Motor neuron (in vitro differentiated cells): ENCODE measurements at regions of chr15 and their contacts with region 1.

Region 1: DNA sequence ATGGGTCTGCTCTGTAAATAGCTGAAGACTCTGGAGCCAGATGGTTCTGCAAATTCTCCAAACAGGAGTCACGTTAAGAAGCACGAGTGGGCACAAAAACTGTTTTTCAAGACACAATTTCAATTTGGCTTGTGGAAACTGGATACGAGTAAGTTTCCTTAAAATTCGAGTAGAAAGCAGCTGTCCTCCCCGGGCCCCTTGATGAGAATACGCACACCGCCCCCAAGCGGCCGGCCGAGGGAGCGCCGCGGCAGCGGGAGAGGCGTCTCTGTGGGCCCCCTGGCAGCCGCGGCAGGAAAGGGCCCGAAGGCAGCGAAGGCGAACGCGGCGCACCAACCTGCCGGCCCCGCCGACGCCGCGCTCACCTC is 778 bp upstream of the THBS1 start:
- ATAC-seq: peak; percentile 75 to 90 (median 86)
- H3K4me3 ChIP-seq: peak overlapping the region; percentile 30 to 48 (median 39)
- H3K27ac ChIP-seq: no peak overlapping the region
- H3K4me1 ChIP-seq: peaks cover 0 to 5% of the 10 kb centered on the region in 2 donors

Region 2: DNA sequence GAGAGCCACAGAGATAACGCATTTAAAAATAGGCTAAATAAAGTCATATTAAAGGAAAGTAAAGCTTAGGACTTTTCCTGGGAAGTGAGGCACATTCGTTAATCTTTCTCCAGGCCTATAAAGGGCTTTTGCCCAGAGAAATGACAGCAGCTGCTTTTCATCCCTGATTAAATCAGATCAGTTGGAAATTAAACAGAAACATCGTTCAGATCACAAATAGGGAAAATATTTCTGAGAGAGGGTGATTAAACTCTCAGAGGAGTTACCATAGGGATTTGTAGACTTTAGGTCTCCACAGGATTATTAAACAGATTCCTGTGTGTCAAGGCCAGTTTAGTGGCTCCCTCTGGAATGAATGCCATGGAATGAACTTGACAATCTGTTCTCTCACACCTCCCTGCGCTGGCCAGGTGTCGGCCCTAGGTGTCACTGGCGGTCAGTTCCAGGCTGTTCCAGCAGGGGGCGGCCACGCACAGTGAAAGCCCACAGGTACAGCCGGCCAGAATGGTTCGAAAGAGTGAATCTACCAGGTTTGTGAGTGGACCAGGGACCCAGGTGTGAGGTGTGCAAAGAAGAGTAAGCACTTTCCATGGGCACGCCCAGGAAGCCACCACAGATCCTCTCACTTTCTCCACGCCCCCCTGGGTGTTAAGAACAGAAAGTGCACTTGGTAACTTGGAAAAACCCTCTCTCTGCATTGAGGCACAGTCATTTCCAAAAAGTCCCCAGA is 762.5 kb before region 1 on chr15:
- in situ Hi-C with region 1: loop called in 2 of 9 experiments (anchors 10 to 25 kb)
- ATAC-seq: peak; percentile 88 to 100 (median 94)
- H3K4me3 ChIP-seq: no peak overlapping the region
- H3K27ac ChIP-seq: no peak overlapping the region
- H3K4me1 ChIP-seq: no peaks in the 10 kb centered on the region

Region 3: GRCh38 chr15:39171944-39172368 is 408.1 kb before region 1 on chr15:
- in situ Hi-C with region 1: loop called in 3 of 9 experiments (anchors 5 to 25 kb)
- ATAC-seq: peak; percentile 65 to 100 (median 93)
- H3K4me3 ChIP-seq: no peak overlapping the region
- H3K27ac ChIP-seq: no peak overlapping the region
- H3K4me1 ChIP-seq: peaks cover 7 to 15% of the 10 kb centered on the region in 2 donors

Region 4: DNA sequence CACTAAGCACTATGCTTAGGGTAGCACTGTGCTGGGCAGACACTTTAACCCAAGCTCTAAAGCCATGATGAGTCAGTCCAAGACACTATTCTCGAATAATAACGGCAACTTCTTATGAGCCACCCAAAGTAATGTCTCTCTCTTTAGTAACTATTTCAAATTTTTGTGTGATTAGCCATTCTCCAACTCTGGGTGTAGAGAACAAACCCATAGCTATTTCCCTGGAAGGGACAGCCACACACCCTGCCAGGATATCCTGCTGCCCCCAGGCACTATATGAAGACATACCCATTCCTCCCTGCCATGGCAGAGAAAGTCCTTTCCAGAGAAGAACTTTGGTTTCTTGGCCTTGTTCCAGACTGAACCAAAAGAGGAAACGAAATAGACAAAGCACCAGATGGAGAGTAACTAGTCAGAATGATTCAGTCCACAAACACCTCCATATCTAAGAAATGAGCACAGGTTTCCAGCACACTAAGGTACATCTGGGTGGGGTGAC is 384.1 kb before region 1 on chr15:
- in situ Hi-C with region 1: loop called in 1 of 9 experiments (anchors 25 kb)
- ATAC-seq: peak in 2 of 8 experiments; percentile 75 to 76
- H3K4me3 ChIP-seq: no peak overlapping the region
- H3K27ac ChIP-seq: no peak overlapping the region
- H3K4me1 ChIP-seq: peaks cover 8 to 13% of the 10 kb centered on the region in 2 donors

Region 5: GRCh38 chr15:39283531-39283930 is 296.6 kb before region 1 on chr15:
- in situ Hi-C with region 1: no loop called
- ATAC-seq: no peak
- H3K4me3 ChIP-seq: no peak overlapping the region
- H3K27ac ChIP-seq: no peak overlapping the region
- H3K4me1 ChIP-seq: no peaks in the 10 kb centered on the region

Region 6: GRCh38 chr15:39756806-39757522 is 176.9 kb after region 1 on chr15:
- in situ Hi-C with region 1: loop called in 1 of 9 experiments (anchors 25 kb)
- ATAC-seq: peak in 1 of 8 experiments; percentile 38
- H3K4me3 ChIP-seq: no peak overlapping the region
- H3K27ac ChIP-seq: no peak overlapping the region
- H3K4me1 ChIP-seq: no peaks in the 10 kb centered on the region